Right cardiac atrium (tissue), 5 donors: ENCODE measurements at regions of chr3 and their contacts with region 1.

Region 1: GRCh38 chr3:138289260-138289659 is 40.4 kb downstream of the NME9 start:
- DNase-seq: no peak
- ATAC-seq: no peak
- H3K4me3 ChIP-seq: no peak overlapping the region
- H3K27ac ChIP-seq: no peak overlapping the region
- H3K4me1 ChIP-seq: no peaks in the 10 kb centered on the region
- H3K27me3 ChIP-seq: no peaks in the 10 kb centered on the region

Region 2: DNA sequence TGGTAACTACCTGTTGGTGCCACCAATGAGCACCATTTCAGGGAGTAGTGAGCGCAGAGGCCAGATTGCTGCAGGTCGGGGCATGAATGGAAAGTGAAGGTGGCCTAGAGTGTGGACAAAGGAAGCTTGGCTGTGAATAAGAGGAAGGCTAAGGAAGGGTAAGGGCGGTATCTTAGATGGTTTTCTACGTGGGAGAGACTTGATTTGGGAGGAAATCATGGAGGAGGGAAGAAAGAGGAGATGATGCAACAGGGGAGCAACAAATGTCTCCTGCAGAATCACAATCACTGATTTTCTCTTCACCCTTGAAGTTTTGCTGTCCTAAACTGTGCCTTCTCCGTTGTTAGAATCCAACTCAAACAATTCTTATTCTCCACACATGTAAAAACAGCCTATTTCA is 18.6 kb after region 1 on chr3:
- intact Hi-C with region 1: loop called in 1 of 4 experiments (anchors 1 kb)
- DNase-seq: no peak
- ATAC-seq: no peak
- H3K4me3 ChIP-seq: no peak overlapping the region
- H3K27ac ChIP-seq: no peak overlapping the region
- H3K4me1 ChIP-seq: no peaks in the 10 kb centered on the region
- H3K27me3 ChIP-seq: no peaks in the 10 kb centered on the region